ENCODE measurements at regions of chr3 and their contacts with region 1.

Region 1: DNA sequence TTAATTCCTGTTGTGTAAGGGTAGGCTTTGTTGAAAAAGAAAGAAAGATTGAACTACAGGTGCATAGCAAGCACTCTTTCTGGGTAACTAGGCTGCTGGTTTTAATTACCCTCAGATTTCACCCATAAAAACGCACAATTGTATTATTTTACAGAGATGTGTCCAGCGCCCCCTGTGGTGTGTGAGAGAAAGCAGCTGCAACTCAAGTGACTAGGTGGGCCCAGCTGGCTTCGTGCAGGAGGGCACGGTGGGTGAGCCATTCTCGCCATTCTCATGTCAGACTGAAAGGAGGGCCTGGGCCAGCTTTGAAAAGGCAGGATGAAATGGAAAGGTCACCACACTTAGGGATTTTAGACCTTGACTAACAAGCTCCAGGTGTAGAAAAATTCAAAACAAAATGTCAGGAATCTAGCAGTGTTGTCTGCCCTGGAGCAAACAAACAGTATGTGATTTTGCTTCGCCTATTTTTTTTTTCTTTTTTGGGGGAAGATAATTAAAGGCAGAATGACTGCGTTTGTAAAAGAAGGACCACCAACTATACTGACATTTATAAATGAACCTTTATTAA is 122.5 kb downstream of the LRIG1 start:
- DNase-seq: peak; percentile 42
- CTCF ChIP-seq: no peak

Region 2: DNA sequence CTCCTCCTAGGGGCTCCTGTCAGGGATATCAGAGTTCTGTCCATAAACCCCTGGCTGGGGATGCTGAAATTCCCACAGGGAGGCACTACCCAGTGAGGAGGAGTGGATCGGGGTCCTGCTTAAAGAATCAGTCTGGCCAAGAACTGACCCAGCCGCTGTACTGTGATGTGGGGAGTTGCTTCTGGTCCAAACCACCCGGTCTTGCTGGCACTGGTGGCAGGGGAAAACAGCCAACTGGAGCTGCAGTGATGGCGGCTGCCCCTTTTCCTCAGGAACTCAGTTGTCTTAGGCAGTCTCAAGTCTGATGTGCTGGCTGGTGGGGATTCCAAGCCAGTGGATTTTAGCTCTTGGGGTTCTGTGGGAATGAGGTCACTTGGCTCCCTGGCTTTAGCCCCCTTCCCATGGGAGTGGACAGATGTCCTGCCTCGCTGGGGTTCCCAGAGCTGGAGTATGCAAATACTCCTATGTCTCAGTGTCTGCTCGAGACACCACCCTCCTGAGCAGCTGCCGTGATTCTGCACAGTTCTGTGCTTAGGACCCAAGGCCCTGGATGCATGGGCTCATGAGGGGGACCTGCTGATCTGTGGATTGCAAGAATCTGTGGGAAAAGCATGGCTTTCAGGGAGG is 60.5 kb before region 1 on chr3:
- CTCF ChIA-PET with region 1: no interaction called
- POLR2A ChIA-PET with region 1: no interaction called
- DNase-seq: no peak
- CTCF ChIP-seq: no peak

Region 3: DNA sequence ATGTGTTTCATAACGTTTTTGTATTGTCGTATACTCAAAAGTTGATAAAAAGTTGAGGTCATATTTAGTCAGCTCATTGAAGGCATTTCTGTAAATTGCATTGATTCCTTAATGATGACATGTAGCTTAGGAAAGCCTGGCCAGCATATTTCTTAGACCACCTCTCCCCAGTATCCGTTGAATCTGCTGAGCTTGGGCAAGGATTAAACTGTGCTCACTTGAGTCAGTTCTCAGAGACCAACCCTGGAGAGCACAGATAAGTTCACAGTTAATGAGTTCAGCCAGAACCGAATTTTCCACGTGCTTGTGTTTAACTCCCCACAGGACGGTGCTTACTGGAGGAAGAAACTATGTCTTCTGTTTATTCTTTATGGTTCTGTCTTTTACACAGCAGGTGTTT is 24.8 kb before region 1 on chr3:
- CTCF ChIA-PET with region 1: interaction called, 13 read pairs
- POLR2A ChIA-PET with region 1: no interaction called
- DNase-seq: no peak
- CTCF ChIP-seq: no peak

Region 4: DNA sequence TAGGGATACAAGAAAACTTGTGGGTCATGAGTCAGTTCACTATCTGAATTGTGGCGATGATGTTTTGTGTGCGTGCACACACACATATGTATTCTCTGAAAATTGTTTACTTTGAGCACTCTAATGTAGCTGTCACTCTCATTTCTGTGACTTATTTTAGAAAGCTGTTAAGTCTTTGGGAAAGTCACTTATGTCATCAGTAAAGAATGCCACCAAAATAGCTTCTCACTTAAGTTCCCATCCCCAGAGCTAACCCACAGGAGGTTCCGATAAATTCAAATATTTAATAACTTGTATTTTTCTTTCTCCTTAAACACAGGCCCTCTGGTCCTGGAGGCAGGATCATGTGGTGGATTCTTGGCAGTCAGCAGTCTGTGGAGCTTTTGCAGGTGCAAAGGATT is 15.8 kb before region 1 on chr3:
- CTCF ChIA-PET with region 1: interaction called, 16 read pairs
- POLR2A ChIA-PET with region 1: no interaction called
- DNase-seq: no peak
- CTCF ChIP-seq: no peak

Region 5: DNA sequence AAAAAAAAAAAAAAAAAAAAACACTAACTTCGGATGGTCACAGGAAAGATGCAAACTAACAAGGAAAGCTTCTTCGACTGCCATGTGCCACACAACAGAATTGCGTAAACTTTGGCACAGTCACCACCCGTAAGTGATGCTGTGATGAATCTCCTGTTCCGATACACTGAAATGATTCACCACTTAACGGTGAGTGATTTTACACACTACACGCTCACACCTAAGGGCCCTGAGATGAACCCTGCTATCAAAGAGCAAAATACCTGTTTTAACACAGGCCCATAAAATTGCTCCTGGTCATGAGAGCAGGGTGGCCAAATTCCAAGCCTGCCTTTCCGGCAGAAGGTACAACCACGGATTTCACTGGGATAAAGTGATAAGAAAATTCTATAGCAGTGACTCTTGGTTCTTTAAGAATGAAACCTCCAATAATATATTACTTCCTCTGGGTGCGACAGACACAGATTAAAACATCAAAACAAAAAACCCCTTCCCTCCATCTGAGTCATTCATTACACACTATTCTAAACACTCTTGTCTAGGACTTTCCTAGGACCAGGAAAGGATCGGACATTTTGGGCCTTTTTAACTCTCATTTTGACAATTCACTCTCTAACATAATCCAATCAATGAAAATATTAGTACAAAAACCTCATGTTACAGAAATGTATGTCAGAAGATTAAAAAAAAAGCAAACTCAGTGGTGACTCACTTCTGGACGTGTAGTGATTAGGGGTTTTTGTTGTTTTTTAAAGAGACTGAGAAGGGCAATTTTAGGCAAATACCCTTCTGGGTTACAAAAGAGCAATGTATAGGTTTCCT is 94.2 kb after region 1 on chr3:
- CTCF ChIA-PET with region 1: no interaction called
- POLR2A ChIA-PET with region 1: no interaction called
- DNase-seq: peak; percentile 53
- CTCF ChIP-seq: no peak

Region 6: DNA sequence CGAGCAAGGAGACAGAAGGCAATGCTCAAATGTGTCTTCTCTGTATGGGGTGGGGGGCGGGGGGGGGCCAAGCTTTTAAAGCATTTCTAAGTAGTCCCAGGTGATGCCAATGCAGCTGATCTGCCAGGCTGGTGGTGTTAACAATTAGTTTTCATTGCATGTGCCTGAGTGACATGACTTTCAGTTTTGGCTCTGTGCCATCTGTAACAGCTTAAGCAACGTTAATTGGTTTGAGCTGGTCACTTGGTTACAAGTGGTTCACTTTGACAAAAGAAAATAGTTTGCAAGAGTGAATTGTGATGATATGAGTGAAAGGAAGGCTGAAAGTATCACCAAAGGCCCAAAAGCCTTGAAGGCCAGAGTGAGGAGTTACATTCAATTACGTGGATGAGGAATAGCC is 148.9 kb after region 1 on chr3:
- CTCF ChIA-PET with region 1: no interaction called
- POLR2A ChIA-PET with region 1: no interaction called
- DNase-seq: no peak
- CTCF ChIP-seq: no peak